Calu3 (cell line): ENCODE measurements at regions of chr19 and their contacts with region 1.

Region 1: GRCh38 chr19:56066152-56067023 is 54.7 kb downstream of the ZNF787 start:
- DNase-seq: peak; percentile 81
- H3K4me3 Mint-ChIP-seq: peak overlapping the region; percentile 56
- H3K27ac Mint-ChIP-seq: no peak overlapping the region
- H3K4me1 Mint-ChIP-seq: peaks cover 10% of the 10 kb centered on the region
- H3K27me3 Mint-ChIP-seq: peaks cover 20% of the 10 kb centered on the region
- CTCF ChIP-seq: peak; percentile 97

Region 2: GRCh38 chr19:56252699-56253422 is 186.5 kb after region 1 on chr19:
- CTCF ChIA-PET with region 1: interaction called, 45 read pairs
- intact Hi-C with region 1: loop called (anchors 2 kb)
- DNase-seq: peak; percentile 91
- H3K4me3 Mint-ChIP-seq: no peak overlapping the region
- H3K27ac Mint-ChIP-seq: peak overlapping the region; percentile 39
- H3K4me1 Mint-ChIP-seq: no peaks in the 10 kb centered on the region
- H3K27me3 Mint-ChIP-seq: no peaks in the 10 kb centered on the region
- CTCF ChIP-seq: peak; percentile 88

Region 3: DNA sequence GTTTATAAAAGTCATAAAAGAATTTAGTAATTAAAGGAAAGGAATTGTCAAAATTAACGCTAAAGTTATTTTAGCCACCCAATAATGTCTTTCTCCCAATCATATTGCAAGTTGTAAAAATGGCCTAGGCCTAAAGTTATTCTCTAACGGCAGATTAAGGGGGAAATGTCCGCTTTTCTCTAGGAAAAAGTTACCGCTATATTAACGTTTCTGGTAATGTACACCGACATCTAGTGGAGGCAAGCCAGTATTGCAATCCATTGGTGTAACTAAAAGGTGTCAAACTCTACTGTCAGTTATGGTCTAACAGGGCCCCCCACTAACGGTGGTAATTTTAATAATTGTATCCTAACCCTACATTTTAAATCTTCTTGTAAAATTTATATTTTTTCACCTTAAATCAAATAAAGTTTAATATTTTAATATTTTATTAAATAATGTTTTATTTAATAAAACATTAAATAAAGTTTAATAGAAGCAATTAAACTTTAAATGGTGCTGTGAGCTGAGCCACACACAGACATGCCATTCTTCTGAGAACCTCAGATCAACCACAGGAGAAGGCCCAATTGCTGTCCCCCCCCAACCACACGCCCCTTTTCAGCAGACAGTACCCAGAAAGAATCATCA is 284.1 kb after region 1 on chr19:
- CTCF ChIA-PET with region 1: interaction called, 3 read pairs
- intact Hi-C with region 1: loop called (anchors 1 kb)
- DNase-seq: peak; percentile 56
- H3K4me3 Mint-ChIP-seq: no peak overlapping the region
- H3K27ac Mint-ChIP-seq: no peak overlapping the region
- H3K4me1 Mint-ChIP-seq: no peaks in the 10 kb centered on the region
- H3K27me3 Mint-ChIP-seq: no peaks in the 10 kb centered on the region
- CTCF ChIP-seq: peak; percentile 72